Heart left ventricle (tissue), 16 donors: ENCODE measurements at regions of chr3 and their contacts with region 1.

Region 1: GRCh38 chr3:88058591-88059368 is at the starts of genes CGGBP1 and ZNF654:
- DNase-seq: peak; percentile 98
- ATAC-seq: peak; percentile 97 to 99 (median 98)
- H3K4me3 ChIP-seq: peak within 1 kb of the TSS; percentile 75 to 94 (median 86)
- H3K27ac ChIP-seq: peak within 1 kb of the TSS; percentile 91 to 99 (median 96)
- H3K4me1 ChIP-seq: peaks cover 7 to 65% (median 37%) of the 10 kb centered on the region in 12 donors
- H3K27me3 ChIP-seq: no peaks in the 10 kb centered on the region
- CTCF ChIP-seq: no peak
- POLR2A ChIP-seq: peak; percentile 20 to 76
- total RNA-seq, gene CGGBP1: 41.9 to 58.8 (median 46.0) TPM
- total RNA-seq, gene ZNF654: 5.5 to 15.9 (median 11.4) TPM

Region 2: GRCh38 chr3:87920549-87920948 is 138.2 kb before region 1 on chr3:
- intact Hi-C with region 1: no loop called
- DNase-seq: no peak
- ATAC-seq: no peak
- H3K4me3 ChIP-seq: no peak overlapping the region
- H3K27ac ChIP-seq: no peak overlapping the region
- H3K4me1 ChIP-seq: no peaks in the 10 kb centered on the region
- H3K27me3 ChIP-seq: no peaks in the 10 kb centered on the region
- CTCF ChIP-seq: no peak
- POLR2A ChIP-seq: no peak

Region 3: GRCh38 chr3:88075072-88075471 is 16.3 kb after region 1 on chr3:
- intact Hi-C with region 1: no loop called
- DNase-seq: no peak
- ATAC-seq: no peak
- H3K4me3 ChIP-seq: no peak overlapping the region
- H3K27ac ChIP-seq: peak overlapping the region in 1 of 12 donors; percentile 33
- H3K4me1 ChIP-seq: peaks cover 0 to 37% (median 19%) of the 10 kb centered on the region in 12 donors
- H3K27me3 ChIP-seq: no peaks in the 10 kb centered on the region
- CTCF ChIP-seq: no peak
- POLR2A ChIP-seq: no peak

Region 4: GRCh38 chr3:88105325-88105724 is 46.5 kb after region 1 on chr3:
- intact Hi-C with region 1: loop called in 7 of 10 experiments (anchors 2 to 10 kb)
- DNase-seq: no peak
- ATAC-seq: peak in 1 of 4 donors; percentile 61
- H3K4me3 ChIP-seq: no peak overlapping the region
- H3K27ac ChIP-seq: no peak overlapping the region
- H3K4me1 ChIP-seq: peaks cover 0 to 20% (median 5%) of the 10 kb centered on the region in 12 donors
- H3K27me3 ChIP-seq: no peaks in the 10 kb centered on the region
- CTCF ChIP-seq: no peak
- POLR2A ChIP-seq: no peak

Region 5: DNA sequence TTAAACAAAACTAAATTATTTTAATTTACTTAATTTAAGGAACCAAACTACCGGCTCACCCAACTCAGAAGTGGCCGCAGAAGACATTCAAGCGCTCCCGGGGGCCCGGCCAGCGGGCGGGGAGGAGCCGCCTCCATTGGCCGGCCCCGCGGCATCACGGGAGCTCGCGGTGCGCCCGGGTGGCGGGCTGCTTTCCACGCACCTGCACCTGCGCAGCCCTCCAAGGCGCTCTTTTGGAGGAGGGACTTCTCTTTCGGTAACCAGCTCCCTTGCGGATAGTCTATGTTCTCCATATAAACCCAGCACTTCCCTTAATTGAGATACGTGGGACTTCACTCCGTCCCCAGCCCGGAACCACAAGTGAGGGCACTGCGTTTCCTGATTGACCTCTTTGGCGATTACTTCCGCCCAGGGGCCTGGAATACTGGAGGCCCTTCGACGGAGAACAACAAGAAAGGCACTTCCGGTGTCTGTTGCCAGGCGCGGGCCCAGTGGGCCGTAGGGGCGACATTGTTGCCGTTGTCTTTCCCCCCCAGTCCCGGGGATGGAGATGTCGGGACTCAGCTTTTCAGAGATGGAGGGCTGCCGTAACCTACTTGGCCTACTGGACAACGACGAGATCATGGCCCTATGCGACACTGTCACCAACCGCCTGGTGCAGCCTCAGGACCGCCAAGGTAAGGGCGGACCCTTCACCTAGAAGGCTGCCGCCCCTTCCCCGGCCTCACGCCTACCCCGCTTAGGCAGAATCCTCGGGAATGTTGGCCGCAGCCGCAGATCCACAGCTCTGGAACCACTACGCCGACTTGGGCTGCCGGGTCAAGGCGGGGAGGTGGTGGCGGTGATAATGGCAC is 91.0 kb after region 1 on chr3 and contains the start of gene C3orf38:
- intact Hi-C with region 1: loop called in 4 of 10 experiments (anchors 2 to 10 kb)
- DNase-seq: peak; percentile 87 to 93 (median 90)
- ATAC-seq: peak; percentile 96 to 99 (median 98)
- H3K4me3 ChIP-seq: peak within 1 kb of the TSS; percentile 66 to 95 (median 86)
- H3K27ac ChIP-seq: peak within 1 kb of the TSS; percentile 80 to 98 (median 89)
- H3K4me1 ChIP-seq: peaks cover 2 to 35% (median 18%) of the 10 kb centered on the region in 12 donors
- H3K27me3 ChIP-seq: no peaks in the 10 kb centered on the region
- CTCF ChIP-seq: no peak
- POLR2A ChIP-seq: peak in 1 of 2 donors; percentile 45
- total RNA-seq, gene C3orf38: 8.6 to 21.5 (median 12.9) TPM

Region 6: DNA sequence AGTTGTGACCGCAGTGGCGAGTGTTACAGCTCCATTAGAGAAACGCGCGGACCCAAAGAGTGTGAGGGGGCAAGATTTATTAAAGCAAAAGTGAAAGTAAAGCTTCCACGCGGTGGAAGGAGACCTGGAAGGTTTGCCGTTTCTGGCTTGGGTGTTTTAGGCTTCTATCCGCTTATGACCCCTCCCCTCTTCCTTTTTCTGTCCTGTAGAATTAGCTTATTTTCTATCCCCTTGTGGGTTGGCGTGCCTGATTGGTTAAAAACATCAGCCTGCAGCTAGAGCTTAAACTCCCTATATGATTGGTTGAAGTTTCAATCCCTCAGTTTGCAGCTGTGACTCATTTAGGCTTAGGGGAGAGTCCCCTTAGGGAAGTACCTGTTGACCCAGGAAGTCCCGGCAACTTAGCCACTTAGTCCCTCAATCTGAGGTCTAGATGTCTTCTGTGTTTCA is 130.6 kb after region 1 on chr3:
- intact Hi-C with region 1: no loop called
- DNase-seq: no peak
- ATAC-seq: no peak
- H3K4me3 ChIP-seq: no peak overlapping the region
- H3K27ac ChIP-seq: no peak overlapping the region
- H3K4me1 ChIP-seq: no peaks in the 10 kb centered on the region
- H3K27me3 ChIP-seq: no peaks in the 10 kb centered on the region
- CTCF ChIP-seq: no peak
- POLR2A ChIP-seq: no peak

Region 7: DNA sequence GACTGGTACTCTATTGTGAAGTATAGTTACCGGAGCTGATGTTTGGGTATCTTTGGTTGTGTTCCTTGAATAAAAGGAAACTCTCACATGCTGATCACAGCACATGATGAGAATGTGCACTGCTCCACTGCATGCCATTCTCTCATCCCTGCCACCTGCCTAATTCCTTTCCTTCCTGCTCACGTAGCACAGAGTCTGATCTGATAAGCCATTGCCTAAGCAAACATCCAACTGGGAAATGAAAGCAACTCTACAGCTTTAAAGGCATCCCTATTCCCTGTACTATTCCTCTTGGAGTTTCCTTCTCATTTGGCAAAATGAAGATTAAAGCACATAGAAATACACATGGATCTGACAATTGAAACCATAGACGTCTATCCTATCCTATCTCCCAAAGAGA is 450.8 kb after region 1 on chr3:
- intact Hi-C with region 1: no loop called
- DNase-seq: no peak
- ATAC-seq: no peak
- H3K4me3 ChIP-seq: no peak overlapping the region
- H3K27ac ChIP-seq: no peak overlapping the region
- H3K4me1 ChIP-seq: no peaks in the 10 kb centered on the region
- H3K27me3 ChIP-seq: no peaks in the 10 kb centered on the region
- CTCF ChIP-seq: no peak
- POLR2A ChIP-seq: no peak